Gastrocnemius medialis (tissue), 4 donors: ENCODE measurements at regions of chr15 and their contacts with region 1.

Region 1: DNA sequence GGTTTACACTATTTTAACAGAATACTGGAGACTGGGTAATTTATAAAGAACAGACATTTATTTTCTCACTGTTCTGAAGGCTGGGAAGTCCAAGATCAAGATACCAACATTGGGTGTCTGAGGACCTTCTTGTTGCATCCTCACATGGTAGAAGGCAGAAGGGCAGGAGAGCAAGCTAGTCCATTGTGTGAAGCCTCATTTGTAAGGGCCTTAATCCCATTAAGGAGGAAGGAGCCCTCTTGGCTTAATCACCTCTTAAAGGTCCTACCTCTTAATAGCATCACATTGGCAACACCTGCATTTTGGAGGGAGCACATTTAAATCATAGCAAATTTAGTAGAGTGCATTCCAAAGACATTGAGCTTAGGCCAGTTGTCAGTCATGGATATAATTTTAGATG is 26.2 kb downstream of the UBE2Q2 start:
- DNase-seq: no peak
- ATAC-seq: no peak
- H3K4me3 ChIP-seq: no peak overlapping the region
- H3K27ac ChIP-seq: no peak overlapping the region
- H3K4me1 ChIP-seq: no peaks in the 10 kb centered on the region
- H3K27me3 ChIP-seq: no peaks in the 10 kb centered on the region
- CTCF ChIP-seq: no peak
- POLR2A ChIP-seq: no peak

Region 2: GRCh38 chr15:75929799-75930565 is 60.5 kb after region 1 on chr15:
- in situ Hi-C with region 1: no loop called
- intact Hi-C with region 1: loop called (anchors 1 kb)
- DNase-seq: no peak
- ATAC-seq: peak in 1 of 2 donors; percentile 49
- H3K4me3 ChIP-seq: no peak overlapping the region
- H3K27ac ChIP-seq: no peak overlapping the region
- H3K4me1 ChIP-seq: peaks cover 15 to 17% of the 10 kb centered on the region in 2 donors
- H3K27me3 ChIP-seq: no peaks in the 10 kb centered on the region
- CTCF ChIP-seq: no peak
- POLR2A ChIP-seq: no peak